Activated CD4-positive, alpha-beta memory T cell treated with anti-CD3 and anti-CD28 coated beads for 36 hours (primary cell): ENCODE measurements at regions of chr6 and their contacts with region 1.

Region 1: DNA sequence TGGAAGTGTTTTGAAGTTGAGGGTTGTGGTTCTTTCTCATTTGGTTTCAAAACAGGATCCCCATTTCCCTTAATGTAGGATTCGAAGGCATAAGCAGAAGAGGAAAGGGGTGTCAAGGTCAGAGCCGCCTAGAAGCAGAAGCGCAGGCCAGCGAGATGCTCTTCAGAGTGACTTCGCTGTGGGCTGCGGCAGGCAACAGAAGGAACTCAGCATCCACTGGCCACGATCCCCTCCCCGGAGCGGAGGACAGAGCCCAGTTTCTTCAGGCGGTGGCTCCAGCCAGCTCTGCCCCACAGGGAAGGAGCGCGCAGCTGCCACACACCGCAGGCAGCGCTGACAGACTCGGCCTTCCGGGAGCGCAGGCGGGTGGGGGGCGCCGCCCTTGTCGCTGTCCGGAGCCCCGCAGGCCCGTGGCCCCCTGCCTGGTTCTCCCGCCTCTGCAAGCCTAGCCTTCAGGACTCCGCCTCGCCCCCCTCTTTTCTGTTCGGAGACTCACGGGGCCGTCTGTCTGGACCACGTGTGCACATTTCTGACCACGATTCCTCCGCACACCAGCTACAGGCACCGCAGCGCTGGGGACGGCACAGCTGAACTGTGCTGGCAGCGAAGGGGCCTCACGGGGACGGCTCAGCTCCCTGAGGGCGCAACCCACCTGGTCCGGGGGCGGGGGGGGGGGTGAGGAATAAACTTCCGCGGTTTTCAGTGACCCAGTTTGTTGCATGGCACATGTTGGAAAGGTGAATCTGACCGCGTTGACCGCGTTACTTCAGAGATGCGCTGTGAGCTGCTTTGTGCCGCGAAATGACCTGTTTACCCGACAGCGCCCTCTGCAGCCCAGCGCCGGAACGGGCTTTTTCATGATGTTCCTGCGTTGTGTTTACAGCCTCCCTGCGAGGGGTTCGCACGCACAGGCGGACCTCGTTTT is 26.1 kb downstream of the TTLL2 start:
- DNase-seq: peak; percentile 96
- H3K4me3 Mint-ChIP-seq: peak overlapping the region; percentile 80
- H3K27ac Mint-ChIP-seq: peak overlapping the region; percentile 95
- H3K4me1 Mint-ChIP-seq: peaks cover 23% of the 10 kb centered on the region
- H3K27me3 Mint-ChIP-seq: peaks cover 33% of the 10 kb centered on the region

Region 2: GRCh38 chr6:166830185-166830890 is 520.7 kb before region 1 on chr6:
- CTCF ChIA-PET with region 1: no interaction called
- POLR2A ChIA-PET with region 1: no interaction called
- intact Hi-C with region 1: loop called (anchors 1 kb)
- DNase-seq: peak; percentile 68
- H3K4me3 Mint-ChIP-seq: no peak overlapping the region
- H3K27ac Mint-ChIP-seq: peak overlapping the region; percentile 58
- H3K4me1 Mint-ChIP-seq: peaks cover 17% of the 10 kb centered on the region
- H3K27me3 Mint-ChIP-seq: no peaks in the 10 kb centered on the region

Region 3: GRCh38 chr6:167079853-167080297 is 271.1 kb before region 1 on chr6:
- CTCF ChIA-PET with region 1: no interaction called
- POLR2A ChIA-PET with region 1: no interaction called
- intact Hi-C with region 1: no loop called
- DNase-seq: peak; percentile 89
- H3K4me3 Mint-ChIP-seq: peak overlapping the region; percentile 6
- H3K27ac Mint-ChIP-seq: peak overlapping the region; percentile 54
- H3K4me1 Mint-ChIP-seq: peaks cover 28% of the 10 kb centered on the region
- H3K27me3 Mint-ChIP-seq: peaks cover 1% of the 10 kb centered on the region

Region 4: GRCh38 chr6:167212713-167213005 is 138.3 kb before region 1 on chr6:
- CTCF ChIA-PET with region 1: interaction called, 4 read pairs
- POLR2A ChIA-PET with region 1: interaction called, 3 read pairs
- intact Hi-C with region 1: loop called (anchors 2 kb)
- DNase-seq: peak; percentile 35
- H3K4me3 Mint-ChIP-seq: no peak overlapping the region
- H3K27ac Mint-ChIP-seq: no peak overlapping the region
- H3K4me1 Mint-ChIP-seq: peaks cover 6% of the 10 kb centered on the region
- H3K27me3 Mint-ChIP-seq: peaks cover 1% of the 10 kb centered on the region

Region 5: DNA sequence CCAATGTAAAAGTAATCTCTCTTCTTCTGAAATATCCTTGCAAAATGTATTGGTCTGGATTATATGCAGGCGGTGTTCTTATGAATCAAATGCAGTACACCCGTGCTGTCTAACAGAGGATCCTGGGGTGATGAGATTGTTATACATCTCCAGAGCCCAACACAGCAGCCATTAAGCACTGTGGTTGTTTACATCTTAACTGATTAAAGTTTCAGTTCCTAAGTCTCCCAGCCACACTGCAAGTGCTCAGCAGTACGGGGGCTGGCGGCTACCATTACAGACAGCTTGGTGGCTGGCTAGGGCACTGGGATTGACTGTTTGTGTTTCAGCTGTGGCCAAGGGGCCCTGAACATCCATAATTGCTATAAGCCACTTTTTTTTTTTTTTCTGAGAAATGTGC is 52.8 kb before region 1 on chr6:
- CTCF ChIA-PET with region 1: interaction called, 4 read pairs
- POLR2A ChIA-PET with region 1: interaction called, 5 read pairs
- intact Hi-C with region 1: loop called (anchors 5 kb)
- DNase-seq: no peak
- H3K4me3 Mint-ChIP-seq: no peak overlapping the region
- H3K27ac Mint-ChIP-seq: no peak overlapping the region
- H3K4me1 Mint-ChIP-seq: no peaks in the 10 kb centered on the region
- H3K27me3 Mint-ChIP-seq: peaks cover 9% of the 10 kb centered on the region

Region 6: DNA sequence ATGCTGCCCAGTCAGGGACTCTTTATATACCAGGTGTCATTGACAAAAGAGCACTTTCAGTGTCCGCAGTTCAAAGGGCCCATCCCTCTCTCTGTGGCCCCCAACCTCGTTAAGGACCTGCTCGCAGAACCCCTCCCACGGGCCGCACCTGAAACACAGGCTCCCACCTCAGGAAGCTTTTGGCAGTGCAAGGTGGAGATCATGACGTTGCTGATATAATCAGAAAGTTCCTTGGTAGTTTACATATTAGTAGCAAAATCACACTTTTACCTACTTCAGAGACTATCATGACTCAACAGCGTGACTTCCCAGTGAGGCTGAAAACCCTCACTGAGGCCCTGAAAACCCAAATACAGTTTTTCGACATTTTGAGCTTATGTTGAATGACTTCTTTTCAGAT is 22.0 kb before region 1 on chr6:
- CTCF ChIA-PET with region 1: interaction called, 33 read pairs
- POLR2A ChIA-PET with region 1: interaction called, 20 read pairs
- intact Hi-C with region 1: loop called (anchors 2 kb)
- DNase-seq: peak; percentile 67
- H3K4me3 Mint-ChIP-seq: no peak overlapping the region
- H3K27ac Mint-ChIP-seq: no peak overlapping the region
- H3K4me1 Mint-ChIP-seq: peaks cover 19% of the 10 kb centered on the region
- H3K27me3 Mint-ChIP-seq: peaks cover 27% of the 10 kb centered on the region

Region 7: GRCh38 chr6:167826230-167826895 is 475.4 kb after region 1 on chr6:
- CTCF ChIA-PET with region 1: interaction called, 4 read pairs
- POLR2A ChIA-PET with region 1: no interaction called
- intact Hi-C with region 1: loop called (anchors 2 kb)
- DNase-seq: peak; percentile 72
- H3K4me3 Mint-ChIP-seq: peak overlapping the region; percentile 81
- H3K27ac Mint-ChIP-seq: no peak overlapping the region
- H3K4me1 Mint-ChIP-seq: peaks cover 43% of the 10 kb centered on the region
- H3K27me3 Mint-ChIP-seq: peaks cover 59% of the 10 kb centered on the region

Region 8: GRCh38 chr6:167855825-167856425 is 504.9 kb after region 1 on chr6:
- CTCF ChIA-PET with region 1: no interaction called
- POLR2A ChIA-PET with region 1: no interaction called
- intact Hi-C with region 1: loop called (anchors 10 kb)
- DNase-seq: peak; percentile 26
- H3K4me3 Mint-ChIP-seq: no peak overlapping the region
- H3K27ac Mint-ChIP-seq: peak overlapping the region; percentile 58
- H3K4me1 Mint-ChIP-seq: peaks cover 25% of the 10 kb centered on the region
- H3K27me3 Mint-ChIP-seq: peaks cover 2% of the 10 kb centered on the region